Endothelial cell of umbilical vein (primary cell): ENCODE measurements at regions of chr4 and their contacts with region 1.

Region 1: DNA sequence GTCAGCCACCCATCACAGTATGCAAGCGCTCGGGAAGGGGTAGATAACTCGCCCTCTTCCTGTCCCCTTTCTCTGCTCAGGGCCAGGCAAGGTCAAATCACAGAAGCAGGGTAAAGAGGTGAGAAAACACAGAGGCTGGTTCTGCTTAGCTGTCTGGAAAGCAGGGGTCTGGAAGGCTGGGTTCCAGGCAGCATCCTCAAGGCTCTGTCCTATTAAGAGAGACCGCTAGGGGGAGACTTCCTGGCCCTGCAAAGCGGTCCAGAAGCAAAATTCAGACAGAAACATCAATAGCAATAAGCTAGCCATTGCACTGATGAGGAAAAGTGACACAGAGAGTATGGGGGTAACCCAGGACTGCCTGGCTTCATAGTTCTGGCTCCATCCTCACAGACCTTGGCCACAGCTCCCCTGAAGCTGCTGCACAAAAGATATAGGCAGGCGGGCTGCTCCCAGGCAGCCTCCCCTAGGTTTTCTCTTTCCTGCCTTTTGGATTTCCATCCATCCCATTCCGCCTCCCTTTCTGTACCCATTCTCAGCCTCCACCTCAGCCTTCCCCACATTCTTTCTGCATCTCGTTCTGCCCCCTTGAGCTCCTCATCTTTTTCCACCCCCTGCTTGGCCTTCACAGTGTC is 308.5 kb downstream of the EVC2 start:
- DNase-seq: peak; percentile 25
- H3K4me3 ChIP-seq: no peak overlapping the region
- H3K27ac ChIP-seq: no peak overlapping the region
- H3K4me1 ChIP-seq: no peaks in the 10 kb centered on the region
- H3K27me3 ChIP-seq: no peaks in the 10 kb centered on the region
- CTCF ChIP-seq: peak; percentile 74 to 82
- POLR2A ChIP-seq: no peak

Region 2: GRCh38 chr4:5365071-5366008 is 34.6 kb before region 1 on chr4:
- CTCF ChIA-PET with region 1: interaction called, 10 read pairs
- POLR2A ChIA-PET with region 1: no interaction called
- dilution Hi-C with region 1: no loop called
- intact Hi-C with region 1: no loop called
- DNase-seq: peak; percentile 47
- H3K4me3 ChIP-seq: no peak overlapping the region
- H3K27ac ChIP-seq: no peak overlapping the region
- H3K4me1 ChIP-seq: no peaks in the 10 kb centered on the region
- H3K27me3 ChIP-seq: no peaks in the 10 kb centered on the region
- CTCF ChIP-seq: no peak
- POLR2A ChIP-seq: no peak

Region 3: DNA sequence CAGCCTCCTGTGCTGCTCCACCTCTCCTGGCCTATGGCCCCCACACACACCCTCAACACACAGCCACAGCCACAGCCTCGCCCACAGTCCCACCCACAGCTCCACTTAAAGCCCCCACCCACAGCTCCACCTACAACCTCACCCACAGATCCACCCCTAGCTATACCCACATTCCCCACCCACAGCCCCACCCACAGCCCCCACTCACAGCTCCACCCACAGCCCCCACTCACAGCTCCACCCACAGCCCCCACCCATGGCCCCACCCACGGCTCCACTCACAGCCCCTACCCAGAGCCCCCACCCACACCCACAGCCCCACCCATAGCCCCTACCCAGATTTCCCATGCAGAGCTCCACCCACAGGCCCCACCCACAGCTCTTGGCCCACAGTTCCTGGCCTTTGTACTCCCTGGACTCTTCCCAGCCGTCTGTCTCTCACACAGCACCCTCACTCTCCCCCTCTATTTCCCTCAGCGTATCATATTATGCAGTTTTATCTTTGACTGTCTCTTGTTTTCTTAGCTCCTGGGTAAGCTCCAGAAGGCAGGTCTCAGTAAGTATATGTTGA is 14.1 kb before region 1 on chr4:
- CTCF ChIA-PET with region 1: interaction called, 15 read pairs
- POLR2A ChIA-PET with region 1: no interaction called
- dilution Hi-C with region 1: no loop called
- intact Hi-C with region 1: no loop called
- DNase-seq: no peak
- H3K4me3 ChIP-seq: no peak overlapping the region
- H3K27ac ChIP-seq: no peak overlapping the region
- H3K4me1 ChIP-seq: no peaks in the 10 kb centered on the region
- H3K27me3 ChIP-seq: no peaks in the 10 kb centered on the region
- CTCF ChIP-seq: no peak
- POLR2A ChIP-seq: no peak

Region 4: GRCh38 chr4:5460116-5460801 is 60.4 kb after region 1 on chr4:
- CTCF ChIA-PET with region 1: interaction called, 40 read pairs
- POLR2A ChIA-PET with region 1: no interaction called
- dilution Hi-C with region 1: no loop called
- intact Hi-C with region 1: no loop called
- DNase-seq: peak; percentile 7
- H3K4me3 ChIP-seq: no peak overlapping the region
- H3K27ac ChIP-seq: no peak overlapping the region
- H3K4me1 ChIP-seq: no peaks in the 10 kb centered on the region
- H3K27me3 ChIP-seq: no peaks in the 10 kb centered on the region
- CTCF ChIP-seq: peak; percentile 36 to 64
- POLR2A ChIP-seq: no peak

Region 5: DNA sequence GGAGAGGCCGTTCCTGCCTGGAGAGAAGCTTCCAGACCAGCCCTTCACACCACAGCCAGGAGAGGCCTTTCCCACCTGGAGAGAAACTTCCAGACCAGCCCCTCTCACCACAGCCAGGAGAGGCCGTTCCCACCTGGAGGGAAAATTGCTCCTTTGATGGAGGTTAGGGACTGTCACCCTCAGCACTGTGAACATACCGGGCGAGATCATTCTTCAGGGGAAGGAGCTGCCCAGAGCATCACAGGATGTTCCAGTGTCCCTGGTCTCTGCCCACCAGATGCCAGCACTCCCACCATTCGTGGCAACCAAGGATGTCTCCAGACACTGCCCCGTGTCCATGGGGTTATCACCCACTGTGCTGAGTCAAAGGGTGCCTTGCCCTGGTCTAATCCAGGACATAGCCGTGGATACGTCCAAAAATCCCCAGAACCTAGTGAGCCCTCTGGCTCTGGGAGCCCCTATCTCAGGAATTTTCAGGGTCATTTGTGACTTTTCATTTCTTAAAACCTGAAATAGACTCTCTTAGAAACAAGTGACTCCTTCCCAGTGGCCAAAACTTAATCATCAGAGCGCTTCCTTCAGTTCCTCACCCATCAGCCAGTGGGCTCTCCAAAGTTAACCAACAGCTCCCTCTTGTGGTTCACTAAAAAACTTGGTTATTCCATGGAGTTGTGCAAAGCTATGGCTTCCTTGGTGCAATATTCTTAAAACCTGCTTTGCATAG is 412.8 kb after region 1 on chr4:
- CTCF ChIA-PET with region 1: interaction called, 22 read pairs
- POLR2A ChIA-PET with region 1: no interaction called
- dilution Hi-C with region 1: no loop called
- intact Hi-C with region 1: loop called (anchors 5 kb)
- DNase-seq: peak; percentile 36
- H3K4me3 ChIP-seq: no peak overlapping the region
- H3K27ac ChIP-seq: no peak overlapping the region
- H3K4me1 ChIP-seq: no peaks in the 10 kb centered on the region
- H3K27me3 ChIP-seq: no peaks in the 10 kb centered on the region
- CTCF ChIP-seq: peak; percentile 41 to 58
- POLR2A ChIP-seq: no peak